K562 (cell line): ENCODE measurements at regions of chr22 and their contacts with region 1.

Region 1: DNA sequence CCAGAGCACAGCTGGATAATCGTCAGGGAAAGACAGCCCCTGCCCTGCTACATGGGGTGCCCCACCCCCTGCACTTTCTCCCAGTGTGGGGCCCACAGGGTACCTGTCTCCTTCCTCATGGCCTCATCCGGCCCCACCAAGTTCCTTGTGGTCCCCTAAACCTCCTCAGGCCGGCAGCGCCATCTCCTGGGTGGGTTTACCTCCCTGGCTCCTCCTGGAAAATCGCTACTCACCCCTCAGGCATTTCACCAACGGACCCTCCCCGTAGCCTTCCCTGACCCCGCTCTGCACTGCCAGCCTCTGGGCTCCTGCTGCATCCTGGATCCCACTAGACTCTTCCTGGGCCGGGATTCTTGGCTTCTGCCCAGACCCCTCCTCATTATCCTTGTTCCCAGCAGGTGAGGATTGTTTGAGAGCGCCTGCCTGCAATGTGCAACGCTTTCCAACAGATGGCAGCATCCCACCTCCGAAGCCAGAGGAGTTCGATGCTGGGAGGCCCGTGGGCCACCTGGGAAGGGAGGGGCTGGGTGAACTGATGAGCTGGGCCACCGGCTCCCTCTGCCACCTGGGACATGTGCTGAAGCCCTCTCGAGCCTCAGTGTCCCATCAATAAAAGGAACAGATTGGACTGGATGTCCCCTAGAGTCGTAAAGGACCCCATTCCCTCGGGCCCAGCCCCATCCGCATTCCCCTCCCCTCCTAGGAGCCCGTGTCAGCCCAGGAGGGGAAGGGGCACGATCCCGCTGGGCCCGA is 44.2 kb upstream of the TTLL12 start:
- DNase-seq: peak; percentile 71 to 73 (median 73)
- ATAC-seq: peak; percentile 79
- H3K4me3 ChIP-seq: no peak overlapping the region
- H3K27ac ChIP-seq: no peak overlapping the region
- H3K4me1 ChIP-seq: peaks cover 0 to 41% of the 10 kb centered on the region in 2 experiments; a peak in 2 of 5 replicates
- H3K27me3 ChIP-seq: peaks cover 0 to 34% of the 10 kb centered on the region in 2 experiments; a peak in 2 of 5 replicates
- CTCF ChIP-seq: peak; percentile 74 to 95 (median 81)
- EP300 ChIP-seq: no peak
- POLR2A ChIP-seq: no peak
- RAD21 ChIP-seq: peak; percentile 80 to 89

Region 2: GRCh38 chr22:43187171-43188099 is 43.7 kb before region 1 on chr22:
- CTCF ChIA-PET with region 1: no interaction called
- POLR2A ChIA-PET with region 1: no interaction called
- in situ Hi-C with region 1: no loop called
- intact Hi-C with region 1: loop called (anchors 5 kb)
- DNase-seq: peak; percentile 90 to 95 (median 92)
- ATAC-seq: peak; percentile 83
- H3K4me3 ChIP-seq: peak overlapping the region; percentile 46
- H3K27ac ChIP-seq: peak overlapping the region; percentile 78
- H3K4me1 ChIP-seq: peaks cover 24 to 27% of the 10 kb centered on the region in 2 experiments; a peak in 4 of 5 replicates
- H3K27me3 ChIP-seq: no peaks in the 10 kb centered on the region
- CTCF ChIP-seq: peak; percentile 65 to 80 (median 76)
- EP300 ChIP-seq: no peak
- POLR2A ChIP-seq: peak; percentile 91
- RAD21 ChIP-seq: peak in 1 of 2 experiments; percentile 35; a peak in 2 of 4 replicates

Region 3: GRCh38 chr22:43263645-43264514 is 32.7 kb after region 1 on chr22:
- CTCF ChIA-PET with region 1: no interaction called
- POLR2A ChIA-PET with region 1: no interaction called
- in situ Hi-C with region 1: no loop called
- intact Hi-C with region 1: no loop called
- DNase-seq: peak; percentile 71 to 89 (median 77)
- ATAC-seq: peak; percentile 85
- H3K4me3 ChIP-seq: no peak overlapping the region
- H3K27ac ChIP-seq: no peak overlapping the region
- H3K4me1 ChIP-seq: peaks cover 18 to 25% of the 10 kb centered on the region in 2 experiments
- H3K27me3 ChIP-seq: peaks cover 17 to 54% of the 10 kb centered on the region in 2 experiments; a peak in 4 of 5 replicates
- CTCF ChIP-seq: no peak
- EP300 ChIP-seq: peak; percentile 70; the same call in 1 of the 2 replicates
- POLR2A ChIP-seq: no peak
- RAD21 ChIP-seq: no peak

Region 4: DNA sequence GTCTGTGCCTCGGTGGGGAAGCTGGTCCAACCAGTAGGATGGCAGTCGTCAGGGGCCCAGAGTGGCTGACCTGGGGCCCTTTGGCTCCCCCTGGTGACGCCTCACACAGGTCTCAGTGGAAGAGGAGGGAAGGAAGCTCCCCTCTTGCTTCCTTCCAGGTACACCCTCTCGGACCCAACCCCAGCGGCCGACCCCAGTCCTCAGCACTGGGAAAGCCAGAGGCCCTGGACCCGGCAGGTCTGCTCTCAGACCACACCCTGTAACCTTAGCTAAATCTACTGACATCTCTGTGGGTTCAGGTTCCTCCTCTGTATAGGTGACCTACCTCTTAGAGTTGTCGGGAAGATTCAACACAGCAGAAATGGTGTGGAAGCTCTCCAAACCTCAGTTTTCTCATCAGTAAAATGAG is 115.4 kb after region 1 on chr22:
- CTCF ChIA-PET with region 1: interaction called, 16 read pairs
- POLR2A ChIA-PET with region 1: no interaction called
- in situ Hi-C with region 1: no loop called
- intact Hi-C with region 1: loop called (anchors 1 kb)
- DNase-seq: peak; percentile 53 to 62 (median 58)
- ATAC-seq: peak; percentile 91
- H3K4me3 ChIP-seq: no peak overlapping the region
- H3K27ac ChIP-seq: no peak overlapping the region
- H3K4me1 ChIP-seq: peaks cover 9 to 21% of the 10 kb centered on the region in 2 experiments; a peak in 4 of 5 replicates
- H3K27me3 ChIP-seq: peaks cover 0 to 17% of the 10 kb centered on the region in 2 experiments; a peak in 4 of 5 replicates
- CTCF ChIP-seq: peak; percentile 69 to 72 (median 72)
- EP300 ChIP-seq: no peak
- POLR2A ChIP-seq: no peak
- RAD21 ChIP-seq: peak; percentile 50 to 80

Region 5: GRCh38 chr22:43385770-43386641 is 154.9 kb after region 1 on chr22:
- CTCF ChIA-PET with region 1: interaction called, 21 read pairs
- POLR2A ChIA-PET with region 1: no interaction called
- in situ Hi-C with region 1: no loop called
- intact Hi-C with region 1: loop called (anchors 1 kb)
- DNase-seq: peak; percentile 72 to 75 (median 74)
- ATAC-seq: peak; percentile 98
- H3K4me3 ChIP-seq: no peak overlapping the region
- H3K27ac ChIP-seq: no peak overlapping the region
- H3K4me1 ChIP-seq: peaks cover 0 to 8% of the 10 kb centered on the region in 2 experiments; a peak in 2 of 5 replicates
- H3K27me3 ChIP-seq: peaks cover 0 to 5% of the 10 kb centered on the region in 2 experiments; a peak in 1 of 5 replicates
- CTCF ChIP-seq: peak; percentile 79 to 87 (median 86)
- EP300 ChIP-seq: no peak
- POLR2A ChIP-seq: no peak
- RAD21 ChIP-seq: peak; percentile 67 to 90